ENCODE measurements at regions of chr15 and their contacts with region 1.

Region 1: GRCh38 chr15:96264801-96265515 is 65.5 kb upstream of the NR2F2 start:
- DNase-seq: peak; percentile 84 to 91
- H3K4me3 ChIP-seq: no peak overlapping the region
- H3K4me3 Mint-ChIP-seq: peak overlapping the region; percentile 68
- H3K27ac Mint-ChIP-seq: peak overlapping the region; percentile 98
- H3K4me1 ChIP-seq: peaks cover 78% of the 10 kb centered on the region
- H3K4me1 Mint-ChIP-seq: peaks cover 50% of the 10 kb centered on the region
- H3K27me3 ChIP-seq: no peaks in the 10 kb centered on the region
- H3K27me3 Mint-ChIP-seq: no peaks in the 10 kb centered on the region
- CTCF ChIP-seq: no peak

Region 2: GRCh38 chr15:95944226-95944625 is 320.7 kb before region 1 on chr15:
- CTCF ChIA-PET with region 1: no interaction called
- POLR2A ChIA-PET with region 1: no interaction called
- intact Hi-C with region 1: loop called (anchors 1 kb)
- DNase-seq: peak; percentile 46 to 65
- H3K4me3 ChIP-seq: no peak overlapping the region
- H3K4me3 Mint-ChIP-seq: peak overlapping the region; percentile 9
- H3K27ac Mint-ChIP-seq: peak overlapping the region; percentile 65
- H3K4me1 ChIP-seq: peaks cover 17% of the 10 kb centered on the region
- H3K4me1 Mint-ChIP-seq: peaks cover 12% of the 10 kb centered on the region
- H3K27me3 ChIP-seq: no peaks in the 10 kb centered on the region
- H3K27me3 Mint-ChIP-seq: no peaks in the 10 kb centered on the region
- CTCF ChIP-seq: no peak

Region 3: DNA sequence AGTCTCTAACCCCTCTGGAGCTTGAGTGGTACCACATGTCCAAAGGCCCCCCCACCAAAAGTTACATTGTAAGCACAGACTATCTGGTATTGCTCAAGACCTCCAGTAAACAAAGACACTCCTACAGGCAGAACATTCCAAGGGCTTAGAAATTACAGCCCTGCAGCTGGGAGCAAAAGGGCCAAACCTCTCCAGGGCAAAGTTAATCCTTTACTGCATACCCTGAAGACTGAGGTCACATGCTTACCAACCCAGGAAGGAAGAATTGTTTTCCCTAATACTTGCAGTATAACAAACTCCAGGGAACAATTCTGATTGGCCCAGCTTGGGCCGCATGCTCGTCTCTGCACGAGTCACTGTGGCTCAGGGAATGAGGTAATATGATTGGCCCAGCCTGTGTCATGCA is 200.6 kb before region 1 on chr15:
- CTCF ChIA-PET with region 1: no interaction called
- POLR2A ChIA-PET with region 1: interaction called, 3 read pairs
- intact Hi-C with region 1: loop called (anchors 1 kb)
- DNase-seq: peak; percentile 83 to 87
- H3K4me3 ChIP-seq: no peak overlapping the region
- H3K4me3 Mint-ChIP-seq: peak overlapping the region; percentile 69
- H3K27ac Mint-ChIP-seq: peak overlapping the region; percentile 40
- H3K4me1 ChIP-seq: peaks cover 38% of the 10 kb centered on the region
- H3K4me1 Mint-ChIP-seq: peaks cover 18% of the 10 kb centered on the region
- H3K27me3 ChIP-seq: no peaks in the 10 kb centered on the region
- H3K27me3 Mint-ChIP-seq: no peaks in the 10 kb centered on the region
- CTCF ChIP-seq: no peak

Region 4: DNA sequence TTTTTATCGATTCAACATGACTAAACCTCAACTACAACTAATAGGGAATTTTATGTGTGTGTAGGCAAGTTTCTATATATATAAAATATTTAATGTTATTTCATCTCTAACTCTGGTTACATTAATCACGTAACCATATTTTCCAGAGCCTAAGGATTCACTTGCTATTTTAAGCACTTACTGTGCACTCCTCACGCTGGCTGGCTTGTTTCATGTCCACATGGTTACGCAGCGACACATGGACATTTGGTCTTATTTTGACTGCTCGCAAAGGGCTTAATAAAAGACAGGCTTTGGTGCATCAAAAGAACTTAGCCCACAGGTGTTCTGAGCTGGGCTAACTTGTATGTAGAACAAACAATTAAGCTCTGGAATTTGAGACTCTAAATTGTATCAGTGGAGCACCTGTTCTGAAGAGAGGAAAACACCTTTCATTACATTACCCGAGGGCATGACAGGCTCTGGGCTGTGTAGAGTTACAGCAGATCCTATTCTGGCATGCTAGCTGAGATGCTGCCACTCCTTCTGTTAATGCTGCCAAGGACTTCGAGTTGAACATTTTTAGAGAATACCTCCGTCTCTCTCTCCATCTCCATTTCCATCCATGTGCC is 64.5 kb before region 1 on chr15:
- CTCF ChIA-PET with region 1: no interaction called
- POLR2A ChIA-PET with region 1: no interaction called
- intact Hi-C with region 1: loop called (anchors 1 kb)
- DNase-seq: peak; percentile 68 to 76
- H3K4me3 ChIP-seq: no peak overlapping the region
- H3K4me3 Mint-ChIP-seq: peak overlapping the region; percentile 24
- H3K27ac Mint-ChIP-seq: peak overlapping the region; percentile 72
- H3K4me1 ChIP-seq: peaks cover 44% of the 10 kb centered on the region
- H3K4me1 Mint-ChIP-seq: peaks cover 29% of the 10 kb centered on the region
- H3K27me3 ChIP-seq: no peaks in the 10 kb centered on the region
- H3K27me3 Mint-ChIP-seq: no peaks in the 10 kb centered on the region
- CTCF ChIP-seq: no peak

Region 5: DNA sequence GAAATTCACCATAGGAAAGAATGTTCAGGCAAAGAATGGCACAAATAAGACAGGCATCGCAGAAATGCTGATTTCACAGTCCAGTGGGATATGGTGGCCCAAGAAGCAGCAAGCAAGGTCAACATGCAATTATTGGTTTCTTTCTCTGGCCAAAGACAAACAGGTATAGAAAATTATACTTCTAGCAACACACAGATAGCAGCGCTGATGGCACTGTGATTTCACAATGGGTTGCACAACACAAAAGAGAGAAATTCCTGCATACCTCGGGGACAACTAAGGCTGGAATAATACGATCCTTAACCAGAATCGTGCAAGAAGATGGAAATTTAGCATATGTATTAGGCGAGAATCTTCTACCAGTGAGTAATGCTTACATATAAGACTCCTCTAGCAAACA is 10.8 kb before region 1 on chr15:
- CTCF ChIA-PET with region 1: no interaction called
- POLR2A ChIA-PET with region 1: no interaction called
- intact Hi-C with region 1: loop called (anchors 1 kb)
- DNase-seq: peak; percentile 59 to 65
- H3K4me3 ChIP-seq: no peak overlapping the region
- H3K4me3 Mint-ChIP-seq: peak overlapping the region; percentile 43
- H3K27ac Mint-ChIP-seq: peak overlapping the region; percentile 77
- H3K4me1 ChIP-seq: peaks cover 49% of the 10 kb centered on the region
- H3K4me1 Mint-ChIP-seq: peaks cover 44% of the 10 kb centered on the region
- H3K27me3 ChIP-seq: no peaks in the 10 kb centered on the region
- H3K27me3 Mint-ChIP-seq: no peaks in the 10 kb centered on the region
- CTCF ChIP-seq: no peak

Measured in Caco-2 (cell line).